ENCODE measurements at regions of chr1 and their contacts with region 1.

Region 1: DNA sequence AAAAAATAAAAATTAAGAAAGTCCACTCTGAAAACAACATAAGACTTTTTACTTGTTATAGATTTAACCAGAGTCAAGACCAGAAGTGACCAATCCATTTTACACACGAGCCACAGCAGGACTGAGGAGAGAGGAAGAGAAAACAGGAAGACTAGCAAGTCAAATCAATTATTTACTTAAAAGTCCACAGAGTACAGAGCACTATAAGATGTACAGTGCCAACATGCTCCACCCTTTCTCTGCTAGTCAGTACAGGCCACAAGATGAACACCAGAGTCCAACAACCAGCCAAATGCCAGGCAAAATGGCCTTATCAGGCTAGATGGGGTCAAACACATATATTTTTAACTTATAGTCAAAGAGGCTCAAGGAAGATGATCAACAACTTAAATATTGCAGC is 19.5 kb downstream of the LUZP1 start:
- DNase-seq: no peak
- H3K4me3 ChIP-seq: no peak overlapping the region
- H3K27ac ChIP-seq: no peak overlapping the region
- H3K4me1 ChIP-seq: peaks cover 0 to 7% (median 1%) of the 10 kb centered on the region in 4 donors
- H3K27me3 ChIP-seq: no peaks in the 10 kb centered on the region
- CTCF ChIP-seq: no peak

Region 2: GRCh38 chr1:23196639-23197328 is 47.7 kb after region 1 on chr1:
- intact Hi-C with region 1: loop called (anchors 2 kb)
- DNase-seq: no peak
- H3K4me3 ChIP-seq: no peak overlapping the region
- H3K27ac ChIP-seq: no peak overlapping the region
- H3K4me1 ChIP-seq: peaks cover 0 to 7% (median 0%) of the 10 kb centered on the region in 4 donors
- H3K27me3 ChIP-seq: peaks cover 0 to 7% of the 10 kb centered on the region in 2 donors
- CTCF ChIP-seq: no peak

Region 3: DNA sequence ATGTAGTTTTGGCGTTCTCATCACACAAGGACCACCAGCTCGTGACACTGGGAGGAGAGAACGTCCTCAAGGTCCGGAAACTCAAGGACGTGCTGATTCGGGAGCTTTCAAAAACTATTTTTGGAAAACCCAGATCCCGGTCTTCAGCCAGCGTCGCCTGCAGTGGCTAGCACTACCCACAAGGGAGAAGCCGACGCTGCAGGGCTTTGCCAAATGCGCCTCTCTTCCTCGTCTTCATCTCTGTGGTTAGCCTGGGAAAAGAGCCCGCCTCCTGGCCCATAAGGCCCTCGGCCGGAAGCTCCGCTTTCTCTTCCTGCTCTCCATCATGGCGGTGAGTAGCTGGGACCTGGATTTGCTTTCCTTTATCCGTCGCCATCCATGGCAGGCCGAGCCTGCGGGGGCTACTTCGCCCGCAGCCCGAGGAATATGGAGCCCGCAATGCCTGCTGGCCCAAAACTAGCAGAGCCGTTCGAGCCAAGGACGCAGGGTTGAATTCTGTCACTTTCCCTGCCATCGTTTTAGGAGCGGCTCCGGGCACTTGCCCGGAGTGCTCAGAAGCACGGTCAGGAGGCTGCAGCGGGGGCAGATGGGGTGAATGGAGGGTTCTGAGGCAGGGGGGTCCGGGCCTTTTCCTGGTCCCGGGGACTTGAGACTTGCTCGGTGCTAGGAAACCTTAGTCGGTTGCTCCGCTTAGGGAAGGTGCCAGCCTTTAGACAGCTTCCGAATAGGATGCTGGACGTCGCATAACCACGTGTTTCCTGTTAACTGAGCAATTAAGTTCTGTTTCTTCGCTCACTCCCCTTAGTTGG is 542.6 kb after region 1 on chr1 and contains the start of gene RPL11:
- intact Hi-C with region 1: no loop called
- DNase-seq: peak; percentile 95 to 96
- H3K4me3 ChIP-seq: peak within 1 kb of the TSS; percentile 69 to 86
- H3K27ac ChIP-seq: peak within 1 kb of the TSS; percentile 84 to 87
- H3K4me1 ChIP-seq: peaks cover 0 to 45% (median 31%) of the 10 kb centered on the region in 4 donors
- H3K27me3 ChIP-seq: no peaks in the 10 kb centered on the region
- CTCF ChIP-seq: peak; percentile 80 to 93

Measured in tibial artery (tissue), 4 donors.